ENCODE measurements at regions of chr5 and their contacts with region 1.

Region 1: DNA sequence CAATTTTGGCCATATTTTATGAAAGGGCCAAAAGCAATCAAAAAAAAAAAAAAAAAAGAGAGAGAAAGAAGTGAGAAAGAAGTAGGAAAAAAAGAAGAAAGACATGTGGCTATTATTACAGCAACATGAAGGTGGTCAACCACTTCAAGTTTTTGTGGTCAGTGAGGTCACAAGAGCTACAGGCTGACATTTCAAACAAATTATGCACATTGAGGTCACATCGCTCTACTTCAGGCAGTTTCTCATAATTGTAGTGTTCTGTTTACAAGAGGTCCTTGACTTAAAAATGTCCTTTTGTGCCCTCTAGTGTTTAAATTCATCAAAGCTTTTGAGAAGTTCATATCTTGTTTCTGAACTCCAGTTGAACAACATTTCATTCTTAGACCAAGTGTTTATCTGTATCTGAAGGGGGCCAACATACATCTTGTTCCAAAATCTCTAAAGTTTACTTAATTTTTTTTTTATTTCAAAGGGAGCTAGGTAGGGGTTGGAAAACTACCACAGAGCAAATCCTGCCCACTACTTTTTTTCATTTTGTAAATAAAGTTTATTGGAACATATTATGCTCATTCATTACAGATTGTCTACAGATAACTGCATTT is 513.1 kb downstream of the PDE4D start:
- DNase-seq: peak; percentile 71
- H3K4me3 ChIP-seq: no peak overlapping the region
- H3K27ac ChIP-seq: no peak overlapping the region
- H3K4me1 ChIP-seq: no peaks in the 10 kb centered on the region
- H3K27me3 ChIP-seq: no peaks in the 10 kb centered on the region
- CTCF ChIP-seq: peak; percentile 20 to 26
- POLR2A ChIP-seq: no peak

Region 2: DNA sequence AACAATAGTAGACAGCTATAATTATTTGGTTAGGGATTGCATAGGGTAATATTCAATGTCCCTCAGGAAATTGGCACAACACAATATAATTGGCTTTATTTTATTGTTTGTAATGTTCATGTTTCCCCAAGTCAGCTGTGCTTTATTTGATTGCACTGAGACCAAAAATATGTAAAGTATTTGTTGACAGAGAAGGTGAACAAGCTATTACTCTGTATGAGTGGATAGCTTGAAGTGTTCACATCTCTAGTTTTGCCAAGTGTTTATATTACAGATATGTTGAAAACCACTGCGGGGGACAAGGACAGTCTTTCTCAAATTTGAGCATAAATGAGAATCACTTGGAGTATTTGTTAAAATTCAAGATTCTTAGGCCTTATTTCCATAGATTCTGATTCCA is 714.3 kb before region 1 on chr5:
- CTCF ChIA-PET with region 1: no interaction called
- POLR2A ChIA-PET with region 1: no interaction called
- dilution Hi-C with region 1: no loop called
- intact Hi-C with region 1: no loop called
- DNase-seq: no peak
- H3K4me3 ChIP-seq: no peak overlapping the region
- H3K27ac ChIP-seq: peak overlapping the region; percentile 90
- H3K4me1 ChIP-seq: peaks cover 45% of the 10 kb centered on the region
- H3K27me3 ChIP-seq: no peaks in the 10 kb centered on the region
- CTCF ChIP-seq: no peak
- POLR2A ChIP-seq: no peak

Region 3: DNA sequence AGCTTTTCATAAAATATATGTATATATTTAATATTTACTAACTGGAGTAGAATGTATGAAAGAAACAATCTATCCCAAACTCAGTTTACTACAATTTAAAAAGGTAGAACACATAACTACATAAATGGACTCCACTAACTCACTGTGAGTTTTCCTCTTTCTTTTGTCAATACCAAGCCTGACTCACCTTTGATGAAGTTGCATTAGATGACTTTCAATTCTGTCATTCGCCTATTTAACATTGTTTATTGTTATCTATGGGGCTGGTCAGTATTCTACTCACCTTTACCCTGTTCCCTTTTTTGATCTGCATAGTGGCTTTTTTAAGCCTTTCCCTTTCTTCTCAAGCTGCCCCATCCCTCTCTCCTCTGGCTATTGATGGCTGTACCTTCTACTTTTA is 167.9 kb before region 1 on chr5:
- CTCF ChIA-PET with region 1: interaction called, 20 read pairs
- POLR2A ChIA-PET with region 1: no interaction called
- dilution Hi-C with region 1: no loop called
- intact Hi-C with region 1: no loop called
- DNase-seq: no peak
- H3K4me3 ChIP-seq: no peak overlapping the region
- H3K27ac ChIP-seq: no peak overlapping the region
- H3K4me1 ChIP-seq: no peaks in the 10 kb centered on the region
- H3K27me3 ChIP-seq: no peaks in the 10 kb centered on the region
- CTCF ChIP-seq: no peak
- POLR2A ChIP-seq: no peak

Region 4: DNA sequence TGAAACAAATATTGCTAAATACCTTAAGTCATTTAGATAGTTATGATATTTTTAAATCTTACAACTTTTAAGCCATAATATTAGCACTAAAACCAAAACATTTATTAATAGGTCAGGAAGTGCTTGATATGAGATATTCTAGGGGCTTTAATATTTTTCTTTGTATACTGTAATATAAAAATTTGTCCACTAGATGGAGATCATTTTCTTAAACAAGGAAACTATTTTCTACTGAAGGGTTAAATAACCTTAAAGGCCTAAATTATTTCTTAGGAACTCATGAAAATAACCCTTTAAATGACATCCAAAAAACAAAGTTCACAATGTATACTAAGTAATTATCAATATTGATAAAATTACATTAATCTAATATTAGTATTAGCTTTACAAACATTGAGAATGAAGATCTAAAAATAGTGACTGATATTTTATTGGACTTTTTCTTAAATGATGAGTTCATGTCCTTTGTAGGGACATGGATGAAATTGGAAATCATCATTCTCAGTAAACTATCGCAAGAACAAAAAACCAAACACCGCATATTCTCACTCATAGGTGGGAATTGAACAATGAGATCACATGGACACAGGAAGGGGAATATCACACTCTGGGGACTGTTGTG is 161.9 kb before region 1 on chr5:
- CTCF ChIA-PET with region 1: interaction called, 29 read pairs
- POLR2A ChIA-PET with region 1: no interaction called
- dilution Hi-C with region 1: no loop called
- intact Hi-C with region 1: loop called (anchors 1 kb)
- DNase-seq: peak; percentile 54
- H3K4me3 ChIP-seq: no peak overlapping the region
- H3K27ac ChIP-seq: no peak overlapping the region
- H3K4me1 ChIP-seq: peaks cover 19% of the 10 kb centered on the region
- H3K27me3 ChIP-seq: no peaks in the 10 kb centered on the region
- CTCF ChIP-seq: peak in 1 of 2 donors; percentile 2
- POLR2A ChIP-seq: no peak

Measured in endothelial cell of umbilical vein (primary cell).